Activated CD4-positive, alpha-beta memory T cell treated with anti-CD3 and anti-CD28 coated beads for 36 hours (primary cell): ENCODE measurements at regions of chr10 and their contacts with region 1.

Region 1: GRCh38 chr10:42638055-42638820 is at the start of gene ZNF33B:
- DNase-seq: peak; percentile 97
- H3K4me3 Mint-ChIP-seq: peak within 1 kb of the TSS; percentile 94
- H3K27ac Mint-ChIP-seq: peak within 1 kb of the TSS; percentile 98
- H3K4me1 Mint-ChIP-seq: peaks cover 32% of the 10 kb centered on the region
- H3K27me3 Mint-ChIP-seq: no peaks in the 10 kb centered on the region
- total RNA-seq, gene ZNF33B: 6.4 to 7.3 TPM

Region 2: DNA sequence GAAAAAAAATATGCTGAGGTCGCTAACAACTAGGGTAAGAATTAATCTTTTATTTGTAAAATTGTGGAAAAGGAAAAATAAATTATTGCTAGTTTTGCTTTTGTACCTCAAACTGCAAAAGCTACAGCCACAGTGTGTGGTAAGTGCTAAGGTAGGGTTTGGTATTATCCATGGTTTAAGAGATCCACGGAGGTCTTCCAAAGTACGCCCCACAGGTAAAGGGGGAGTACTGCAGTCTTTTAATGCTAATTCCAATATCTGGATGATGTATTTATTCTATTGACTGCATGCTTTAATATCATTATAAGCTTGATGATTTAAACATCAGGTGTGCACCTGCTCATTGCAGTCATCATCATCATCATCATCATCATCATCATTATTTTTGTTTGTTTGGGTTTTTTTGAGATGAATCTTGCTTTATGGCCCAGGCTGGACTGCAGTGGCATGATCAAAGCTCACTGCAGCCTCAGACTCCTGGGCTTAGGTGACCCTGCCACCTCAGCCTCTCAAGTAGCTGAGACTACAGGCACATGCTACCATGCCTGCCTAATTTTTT is 106.0 kb after region 1 on chr10:
- CTCF ChIA-PET with region 1: no interaction called
- POLR2A ChIA-PET with region 1: no interaction called
- intact Hi-C with region 1: no loop called
- DNase-seq: no peak
- H3K4me3 Mint-ChIP-seq: no peak overlapping the region
- H3K27ac Mint-ChIP-seq: no peak overlapping the region
- H3K4me1 Mint-ChIP-seq: no peaks in the 10 kb centered on the region
- H3K27me3 Mint-ChIP-seq: peaks cover 12% of the 10 kb centered on the region

Region 3: DNA sequence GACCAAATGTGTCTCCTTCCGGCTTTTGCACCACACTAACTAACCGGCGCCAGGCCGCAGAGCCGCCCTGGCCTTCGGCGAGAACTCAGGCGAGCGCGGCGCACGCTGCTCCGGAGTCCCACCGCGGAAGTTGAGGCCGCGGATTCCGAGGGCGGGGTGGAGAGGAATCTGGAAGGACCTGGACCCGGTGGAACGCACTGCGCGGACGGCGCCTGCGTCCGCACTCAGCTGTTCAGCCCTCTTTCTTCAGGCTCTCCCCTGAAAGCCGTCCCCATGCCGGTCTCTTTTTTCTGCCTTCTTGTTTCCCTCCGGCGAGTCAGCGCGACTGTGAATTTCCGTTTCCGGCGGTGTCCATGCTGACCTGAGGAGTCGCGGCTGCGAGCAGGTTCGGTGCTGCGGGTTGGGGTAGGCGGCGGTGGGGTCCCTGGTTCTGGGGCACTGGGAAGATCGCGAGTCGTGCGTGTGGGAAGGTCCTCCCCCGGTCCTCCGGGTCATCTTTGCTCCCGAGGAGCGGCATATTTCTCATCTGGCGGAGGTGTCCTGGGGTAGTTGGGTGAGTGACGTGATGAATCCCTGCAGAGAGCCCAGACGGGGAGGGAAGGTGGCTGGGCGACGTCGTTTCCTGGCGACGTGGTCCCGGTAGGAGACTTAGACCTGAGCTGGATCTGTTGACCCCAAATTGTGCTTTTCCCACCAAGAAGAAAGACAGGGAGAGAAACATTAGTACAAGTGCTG is 144.4 kb after region 1 on chr10 and contains the start of gene BMS1:
- CTCF ChIA-PET with region 1: no interaction called
- POLR2A ChIA-PET with region 1: interaction called, 3 read pairs
- intact Hi-C with region 1: loop called (anchors 1 kb)
- DNase-seq: peak; percentile 94
- H3K4me3 Mint-ChIP-seq: peak within 1 kb of the TSS; percentile 85
- H3K27ac Mint-ChIP-seq: peak within 1 kb of the TSS; percentile 90
- H3K4me1 Mint-ChIP-seq: peaks cover 17% of the 10 kb centered on the region
- H3K27me3 Mint-ChIP-seq: peaks cover 1% of the 10 kb centered on the region
- total RNA-seq, gene BMS1: 25.5 to 25.9 TPM

Region 4: DNA sequence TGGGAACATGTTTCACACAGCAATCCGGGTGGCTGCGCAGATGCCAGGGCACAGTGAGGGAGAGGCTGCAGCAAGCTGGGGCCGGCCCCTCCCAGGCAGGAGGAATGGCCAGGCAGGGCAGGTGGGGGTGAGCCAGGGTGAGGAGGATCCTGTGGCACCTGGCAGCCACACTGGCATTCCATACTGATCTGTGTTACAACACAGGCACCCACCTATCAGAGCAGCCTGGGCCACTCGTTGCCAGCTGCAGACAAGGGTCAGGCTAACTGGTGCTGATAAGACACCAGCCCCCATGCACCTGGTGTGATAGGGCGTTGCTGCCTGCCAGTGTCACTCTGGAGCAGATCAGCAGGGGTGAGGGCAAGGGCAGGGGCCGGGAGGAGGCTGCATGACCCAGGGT is 422.1 kb after region 1 on chr10:
- CTCF ChIA-PET with region 1: no interaction called
- POLR2A ChIA-PET with region 1: no interaction called
- intact Hi-C with region 1: no loop called
- DNase-seq: no peak
- H3K4me3 Mint-ChIP-seq: no peak overlapping the region
- H3K27ac Mint-ChIP-seq: no peak overlapping the region
- H3K4me1 Mint-ChIP-seq: no peaks in the 10 kb centered on the region
- H3K27me3 Mint-ChIP-seq: no peaks in the 10 kb centered on the region

Region 5: GRCh38 chr10:43128958-43129706 is 490.9 kb after region 1 on chr10:
- CTCF ChIA-PET with region 1: no interaction called
- POLR2A ChIA-PET with region 1: no interaction called
- intact Hi-C with region 1: loop called (anchors 10 kb)
- DNase-seq: peak; percentile 70
- H3K4me3 Mint-ChIP-seq: no peak overlapping the region
- H3K27ac Mint-ChIP-seq: peak overlapping the region; percentile 76
- H3K4me1 Mint-ChIP-seq: peaks cover 25% of the 10 kb centered on the region
- H3K27me3 Mint-ChIP-seq: no peaks in the 10 kb centered on the region

Region 6: GRCh38 chr10:43221419-43222209 is 583.4 kb after region 1 on chr10:
- CTCF ChIA-PET with region 1: no interaction called
- POLR2A ChIA-PET with region 1: no interaction called
- intact Hi-C with region 1: no loop called
- DNase-seq: peak; percentile 8
- H3K4me3 Mint-ChIP-seq: no peak overlapping the region
- H3K27ac Mint-ChIP-seq: no peak overlapping the region
- H3K4me1 Mint-ChIP-seq: peaks cover 12% of the 10 kb centered on the region
- H3K27me3 Mint-ChIP-seq: no peaks in the 10 kb centered on the region

Region 7: DNA sequence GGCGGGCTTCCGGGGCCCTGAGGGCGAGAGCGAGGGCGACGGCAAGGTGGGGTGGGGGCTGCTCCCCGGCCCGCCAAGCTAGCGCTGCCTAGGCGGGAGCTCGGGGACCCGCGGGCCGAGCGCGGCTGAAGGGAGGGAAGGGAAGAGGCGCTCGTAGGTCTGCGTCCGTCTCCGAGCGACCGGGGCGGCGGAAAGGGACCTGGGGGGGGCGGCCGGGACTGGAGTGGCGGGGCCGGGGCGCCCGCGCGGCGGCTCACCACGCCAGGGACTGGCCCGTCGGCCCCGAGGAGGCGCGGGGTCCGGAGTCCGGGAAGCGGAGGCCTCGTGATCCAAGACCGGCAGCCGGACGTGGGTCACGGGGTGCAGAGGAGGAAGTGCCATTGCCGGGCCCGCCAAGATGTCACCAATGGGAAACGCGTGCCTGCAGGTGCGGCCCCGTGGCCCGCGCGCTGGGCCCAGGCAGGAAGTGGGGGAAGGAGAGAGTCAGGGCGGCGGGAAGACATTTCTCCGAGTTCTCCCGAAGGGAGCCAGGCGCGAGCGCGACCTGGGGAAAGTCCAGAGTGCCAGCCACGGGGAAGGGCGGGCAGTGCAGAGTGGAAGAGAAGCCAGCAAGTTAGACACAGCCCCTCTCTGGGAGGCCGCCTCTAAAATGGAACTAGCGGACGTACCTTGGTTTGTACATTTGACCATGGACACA is 758.8 kb after region 1 on chr10:
- CTCF ChIA-PET with region 1: no interaction called
- POLR2A ChIA-PET with region 1: no interaction called
- intact Hi-C with region 1: loop called (anchors 10 kb)
- DNase-seq: peak; percentile 92
- H3K4me3 Mint-ChIP-seq: peak overlapping the region; percentile 81
- H3K27ac Mint-ChIP-seq: peak overlapping the region; percentile 100
- H3K4me1 Mint-ChIP-seq: peaks cover 63% of the 10 kb centered on the region
- H3K27me3 Mint-ChIP-seq: no peaks in the 10 kb centered on the region

Region 8: DNA sequence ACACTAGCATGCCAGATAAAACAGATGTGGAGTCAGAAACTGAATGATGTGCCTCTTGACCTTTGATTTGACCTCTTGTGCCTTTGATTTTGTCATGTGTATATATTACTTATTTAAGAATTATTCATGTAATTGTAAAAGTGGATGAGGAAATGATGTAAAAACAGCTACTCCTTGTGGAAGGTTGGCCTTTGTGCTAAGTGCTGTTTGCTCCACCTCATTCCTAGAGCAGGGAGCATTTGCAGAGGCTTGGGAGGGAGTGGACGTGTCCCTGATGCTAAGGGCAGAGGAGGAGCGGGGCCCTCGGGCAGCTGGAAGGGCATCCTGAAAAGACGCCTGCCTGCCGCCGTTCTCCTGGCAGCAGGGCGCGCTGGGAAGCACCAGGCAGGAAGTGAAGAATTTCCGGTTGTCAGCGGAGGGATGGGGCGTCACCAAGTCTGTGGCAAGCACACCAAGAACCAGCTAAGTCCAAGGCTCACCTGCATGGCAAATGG is 1208.0 kb after region 1 on chr10:
- CTCF ChIA-PET with region 1: no interaction called
- POLR2A ChIA-PET with region 1: no interaction called
- intact Hi-C with region 1: no loop called
- DNase-seq: peak; percentile 68
- H3K4me3 Mint-ChIP-seq: peak overlapping the region; percentile 61
- H3K27ac Mint-ChIP-seq: peak overlapping the region; percentile 70
- H3K4me1 Mint-ChIP-seq: peaks cover 21% of the 10 kb centered on the region
- H3K27me3 Mint-ChIP-seq: no peaks in the 10 kb centered on the region